ENCODE measurements at regions of chr14 and their contacts with region 1.

Region 1: DNA sequence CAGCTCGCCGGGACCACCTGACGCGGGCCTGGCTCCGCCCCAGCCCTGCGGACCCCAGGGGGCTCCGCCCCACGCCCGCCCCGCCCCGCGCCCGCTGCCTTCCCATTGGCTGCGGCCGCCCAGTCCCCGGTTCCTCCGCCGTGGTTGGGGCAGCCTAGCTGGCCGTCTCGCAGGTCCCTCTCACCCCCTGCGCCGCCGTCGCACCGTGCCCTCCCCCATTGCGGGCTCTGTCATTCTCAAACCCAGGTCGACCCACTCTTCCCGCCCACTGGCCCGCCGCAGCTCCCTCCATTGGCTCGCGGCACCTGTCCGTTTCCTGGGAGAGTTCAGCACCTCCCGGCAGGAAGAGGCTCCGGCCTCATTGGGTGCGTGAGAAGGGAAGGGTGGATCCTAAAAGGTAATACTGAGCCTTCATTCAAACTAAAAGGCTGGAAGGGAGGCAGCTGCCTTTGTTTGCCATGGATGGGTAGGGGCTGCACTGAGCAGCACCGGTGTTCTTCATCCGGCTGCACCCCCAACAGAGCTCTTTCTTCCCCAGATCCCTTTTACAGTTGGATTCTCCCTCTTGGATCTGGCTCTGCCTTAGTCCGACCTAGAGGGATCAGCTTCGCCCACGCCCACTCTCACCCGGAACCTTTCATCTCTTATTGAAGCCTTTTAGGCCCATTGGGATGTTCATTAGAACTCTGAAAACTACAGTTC is 381 bp upstream of the MAP3K9 start:
- DNase-seq: peak; percentile 99
- H3K4me3 Mint-ChIP-seq: no peak overlapping the region
- H3K27ac Mint-ChIP-seq: no peak overlapping the region
- H3K4me1 Mint-ChIP-seq: peaks cover 6% of the 10 kb centered on the region
- H3K27me3 Mint-ChIP-seq: no peaks in the 10 kb centered on the region
- CTCF ChIP-seq: no peak

Region 2: GRCh38 chr14:70600382-70601157 is 209.1 kb before region 1 on chr14 and contains the start of gene MED6:
- CTCF ChIA-PET with region 1: no interaction called
- POLR2A ChIA-PET with region 1: interaction called, 12 read pairs
- intact Hi-C with region 1: no loop called
- DNase-seq: peak; percentile 95
- H3K4me3 Mint-ChIP-seq: peak within 1 kb of the TSS; percentile 98
- H3K27ac Mint-ChIP-seq: peak within 1 kb of the TSS; percentile 98
- H3K4me1 Mint-ChIP-seq: peaks cover 13% of the 10 kb centered on the region
- H3K27me3 Mint-ChIP-seq: peaks cover 11% of the 10 kb centered on the region
- CTCF ChIP-seq: no peak
- total RNA-seq, gene MED6: 41.6 and 60.8 TPM in 2 replicates

Region 3: DNA sequence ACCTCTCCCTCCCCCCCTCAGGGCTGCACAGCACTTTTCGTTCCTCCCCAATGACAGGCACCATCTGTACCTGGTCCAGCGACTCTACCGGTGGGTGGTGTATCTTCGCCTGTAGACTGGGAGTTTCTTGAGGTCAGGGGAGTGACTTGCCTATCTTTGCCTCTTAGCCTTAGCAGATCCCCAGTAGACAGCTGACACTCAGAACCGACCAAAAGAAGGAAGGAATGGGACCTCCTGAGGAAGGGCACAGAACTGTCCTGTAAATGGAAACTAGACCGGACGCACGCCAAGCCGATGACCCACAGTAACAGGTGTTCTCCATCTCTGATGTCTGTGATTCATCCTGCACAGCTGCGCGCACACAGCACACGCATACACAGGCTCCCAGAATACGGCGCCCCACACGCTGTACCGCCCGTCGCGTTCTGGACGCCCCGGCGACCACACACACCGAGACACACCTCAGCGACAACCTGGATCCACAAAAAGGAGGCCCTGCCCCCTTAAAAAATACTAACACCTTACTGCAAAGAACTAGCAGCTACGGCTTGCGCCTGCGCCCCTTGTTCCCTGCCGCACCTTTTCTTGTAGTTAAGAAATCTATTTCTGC is 168.7 kb before region 1 on chr14:
- CTCF ChIA-PET with region 1: no interaction called
- POLR2A ChIA-PET with region 1: interaction called, 10 read pairs
- intact Hi-C with region 1: no loop called
- DNase-seq: peak; percentile 40
- H3K4me3 Mint-ChIP-seq: peak overlapping the region; percentile 85
- H3K27ac Mint-ChIP-seq: no peak overlapping the region
- H3K4me1 Mint-ChIP-seq: no peaks in the 10 kb centered on the region
- H3K27me3 Mint-ChIP-seq: peaks cover 16% of the 10 kb centered on the region
- CTCF ChIP-seq: no peak

Region 4: GRCh38 chr14:70771781-70772212 is 37.9 kb before region 1 on chr14:
- CTCF ChIA-PET with region 1: no interaction called
- POLR2A ChIA-PET with region 1: interaction called, 60 read pairs
- intact Hi-C with region 1: no loop called
- DNase-seq: peak; percentile 40
- H3K4me3 Mint-ChIP-seq: peak overlapping the region; percentile 20
- H3K27ac Mint-ChIP-seq: peak overlapping the region; percentile 76
- H3K4me1 Mint-ChIP-seq: peaks cover 32% of the 10 kb centered on the region
- H3K27me3 Mint-ChIP-seq: no peaks in the 10 kb centered on the region
- CTCF ChIP-seq: no peak

Region 5: GRCh38 chr14:70785556-70785955 is 24.1 kb before region 1 on chr14:
- CTCF ChIA-PET with region 1: interaction called, 4 read pairs
- POLR2A ChIA-PET with region 1: interaction called, 31 read pairs
- intact Hi-C with region 1: loop called (anchors 2 kb)
- DNase-seq: peak; percentile 79
- H3K4me3 Mint-ChIP-seq: no peak overlapping the region
- H3K27ac Mint-ChIP-seq: peak overlapping the region; percentile 84
- H3K4me1 Mint-ChIP-seq: peaks cover 47% of the 10 kb centered on the region
- H3K27me3 Mint-ChIP-seq: no peaks in the 10 kb centered on the region
- CTCF ChIP-seq: no peak

Region 6: DNA sequence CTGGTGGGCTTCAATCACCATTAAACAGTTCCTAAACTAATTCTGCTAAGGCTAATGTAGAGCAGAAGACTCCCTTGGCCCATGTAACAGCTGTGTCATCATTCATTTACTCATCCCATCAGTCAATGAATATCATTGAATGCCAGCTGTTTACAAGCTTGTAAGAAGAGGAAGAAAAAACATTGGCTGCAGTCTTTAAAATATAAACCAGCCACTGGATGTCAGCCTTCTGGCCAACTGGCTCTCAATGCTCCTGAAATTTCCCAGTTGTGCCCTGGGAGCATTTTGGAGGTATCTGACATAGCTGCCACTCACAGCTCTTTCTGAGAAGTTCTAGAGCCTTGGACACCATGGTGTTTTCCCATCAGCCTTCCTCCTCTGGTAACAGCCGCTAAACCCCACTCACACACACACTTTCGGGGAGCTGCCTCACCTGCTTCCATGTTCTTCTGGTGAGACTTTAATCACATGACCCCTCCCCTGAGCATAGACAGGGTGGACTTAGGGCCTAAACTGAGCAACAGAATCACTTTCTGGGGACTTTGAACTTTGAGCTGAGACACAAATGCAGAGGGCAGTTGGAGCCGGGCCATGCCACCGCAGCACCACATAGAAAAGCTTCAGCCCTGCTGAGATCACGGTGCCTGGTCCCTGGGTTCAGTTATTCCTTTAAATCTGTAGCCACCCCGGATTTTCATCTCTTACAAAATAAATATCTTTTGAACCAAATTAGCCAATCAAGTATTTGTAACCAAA is 17.9 kb after region 1 on chr14:
- CTCF ChIA-PET with region 1: no interaction called
- POLR2A ChIA-PET with region 1: no interaction called
- intact Hi-C with region 1: no loop called
- DNase-seq: no peak
- H3K4me3 Mint-ChIP-seq: no peak overlapping the region
- H3K27ac Mint-ChIP-seq: no peak overlapping the region
- H3K4me1 Mint-ChIP-seq: no peaks in the 10 kb centered on the region
- H3K27me3 Mint-ChIP-seq: no peaks in the 10 kb centered on the region
- CTCF ChIP-seq: no peak

Region 7: DNA sequence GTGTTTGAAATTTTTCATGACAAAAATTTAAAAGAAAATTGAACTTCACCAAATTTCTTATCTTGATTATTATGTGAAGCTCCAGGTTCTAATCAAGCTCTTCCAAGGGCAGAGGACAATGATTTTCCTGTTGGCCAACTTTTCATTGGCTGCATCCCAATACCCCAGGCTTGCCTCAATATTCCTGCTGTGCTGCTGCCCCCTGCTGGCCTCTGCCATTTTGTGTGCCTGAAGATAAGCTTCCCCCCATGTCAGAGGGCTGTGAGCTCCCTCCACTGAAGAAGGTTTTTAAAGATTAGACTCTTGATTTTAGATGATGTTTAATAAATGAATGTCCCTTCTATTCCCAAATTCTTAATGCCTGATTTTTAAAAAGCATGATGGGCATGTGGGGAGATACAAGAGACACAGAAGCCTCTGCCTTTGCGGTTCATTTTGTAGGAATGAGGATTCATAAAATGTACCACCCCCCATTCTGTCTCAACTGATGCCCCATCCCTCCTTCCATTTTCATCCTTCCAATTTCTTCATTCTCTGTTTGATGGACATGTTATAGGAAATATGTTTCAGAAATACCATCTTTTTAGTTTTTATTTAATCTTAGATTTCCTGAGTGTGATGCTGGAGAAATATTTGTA is 1045.8 kb after region 1 on chr14:
- CTCF ChIA-PET with region 1: no interaction called
- POLR2A ChIA-PET with region 1: no interaction called
- intact Hi-C with region 1: loop called (anchors 10 kb)
- DNase-seq: peak; percentile 87
- H3K4me3 Mint-ChIP-seq: no peak overlapping the region
- H3K27ac Mint-ChIP-seq: no peak overlapping the region
- H3K4me1 Mint-ChIP-seq: peaks cover 10% of the 10 kb centered on the region
- H3K27me3 Mint-ChIP-seq: peaks cover 42% of the 10 kb centered on the region
- CTCF ChIP-seq: peak; percentile 75